Activated B cell treated with CpG ODN at 0.5 μM for 24 hours (primary cell): ENCODE measurements at regions of chr12 and their contacts with region 1.

Region 1: GRCh38 chr12:12032851-12033588 is 37.7 kb upstream of the BCL2L14 start:
- DNase-seq: peak; percentile 34
- ATAC-seq: peak; percentile 72
- H3K4me3 Mint-ChIP-seq: peak overlapping the region; percentile 78
- H3K27ac Mint-ChIP-seq: peak overlapping the region; percentile 41
- H3K4me1 Mint-ChIP-seq: peaks cover 16% of the 10 kb centered on the region
- H3K27me3 Mint-ChIP-seq: peaks cover 5% of the 10 kb centered on the region
- CTCF ChIP-seq: peak; percentile 70

Region 2: DNA sequence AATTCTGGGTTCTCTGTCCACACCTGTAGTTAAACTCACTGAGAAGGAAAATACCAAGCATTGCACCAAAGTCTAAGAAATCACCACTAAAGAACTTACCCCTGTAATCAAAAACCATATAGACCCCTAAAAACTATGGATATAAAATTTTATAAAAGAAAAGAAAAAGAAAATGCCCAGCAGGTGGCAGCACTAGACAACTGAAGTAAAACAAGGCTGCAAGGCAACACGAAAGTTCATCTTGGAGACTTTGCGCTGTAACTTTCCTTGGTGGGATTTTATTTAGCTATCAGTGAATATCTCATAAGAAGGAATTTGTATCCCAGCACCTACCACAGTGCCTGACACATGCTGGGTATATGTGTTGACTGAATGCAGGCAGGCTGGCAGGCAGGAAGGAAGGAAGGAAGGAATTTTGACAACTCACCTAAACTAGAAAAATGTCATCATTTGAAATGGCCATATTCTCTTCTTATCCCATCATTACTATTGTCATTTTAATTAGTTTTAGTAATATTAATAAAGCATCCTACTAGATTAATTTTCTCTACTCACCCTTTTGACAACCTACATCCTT is 451.8 kb before region 1 on chr12:
- CTCF ChIA-PET with region 1: interaction called, 290 read pairs
- POLR2A ChIA-PET with region 1: interaction called, 8 read pairs
- intact Hi-C with region 1: loop called (anchors 1 kb)
- DNase-seq: no peak
- ATAC-seq: no peak
- H3K4me3 Mint-ChIP-seq: no peak overlapping the region
- H3K27ac Mint-ChIP-seq: no peak overlapping the region
- H3K4me1 Mint-ChIP-seq: peaks cover 11% of the 10 kb centered on the region
- H3K27me3 Mint-ChIP-seq: peaks cover 2% of the 10 kb centered on the region
- CTCF ChIP-seq: peak; percentile 40

Region 3: GRCh38 chr12:11730299-11731041 is 302.6 kb before region 1 on chr12:
- CTCF ChIA-PET with region 1: interaction called, 3 read pairs
- POLR2A ChIA-PET with region 1: interaction called, 10 read pairs
- intact Hi-C with region 1: loop called (anchors 2 kb)
- DNase-seq: peak; percentile 41
- ATAC-seq: peak; percentile 78
- H3K4me3 Mint-ChIP-seq: peak overlapping the region; percentile 74
- H3K27ac Mint-ChIP-seq: peak overlapping the region; percentile 89
- H3K4me1 Mint-ChIP-seq: peaks cover 96% of the 10 kb centered on the region
- H3K27me3 Mint-ChIP-seq: no peaks in the 10 kb centered on the region
- CTCF ChIP-seq: no peak

Region 4: DNA sequence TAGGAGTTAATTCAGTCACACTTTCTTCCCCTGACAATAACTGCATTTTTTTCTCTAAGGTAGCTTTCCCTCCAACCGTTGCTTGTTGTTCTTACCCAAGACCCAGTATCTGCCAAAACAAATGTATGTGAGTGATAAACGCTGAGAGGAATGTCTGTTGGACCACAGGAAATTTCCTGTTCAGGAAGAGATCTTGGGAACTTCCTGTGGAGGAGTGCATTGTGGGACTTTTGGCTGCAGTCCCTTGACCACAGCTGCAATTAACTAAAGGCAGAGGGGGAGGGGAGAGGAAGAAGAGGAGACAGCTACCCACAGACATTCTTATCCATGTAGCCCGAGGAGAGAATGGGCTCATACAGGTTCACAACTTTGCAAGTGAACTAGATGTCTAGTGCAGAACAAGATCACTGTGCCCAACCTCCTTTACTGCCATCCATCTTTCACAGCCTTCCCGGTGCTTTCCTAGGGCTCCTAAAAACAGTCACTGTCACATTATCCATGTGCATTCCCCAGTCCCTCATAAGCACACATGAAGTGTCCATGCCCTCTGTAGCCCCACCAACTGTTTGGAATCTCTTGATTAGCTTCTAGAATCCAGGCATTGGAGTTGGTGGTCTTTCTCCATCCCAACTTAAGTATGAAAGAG is 234.0 kb before region 1 on chr12:
- CTCF ChIA-PET with region 1: no interaction called
- POLR2A ChIA-PET with region 1: interaction called, 14 read pairs
- intact Hi-C with region 1: no loop called
- DNase-seq: no peak
- ATAC-seq: no peak
- H3K4me3 Mint-ChIP-seq: no peak overlapping the region
- H3K27ac Mint-ChIP-seq: peak overlapping the region; percentile 57
- H3K4me1 Mint-ChIP-seq: peaks cover 51% of the 10 kb centered on the region
- H3K27me3 Mint-ChIP-seq: no peaks in the 10 kb centered on the region
- CTCF ChIP-seq: no peak

Region 5: DNA sequence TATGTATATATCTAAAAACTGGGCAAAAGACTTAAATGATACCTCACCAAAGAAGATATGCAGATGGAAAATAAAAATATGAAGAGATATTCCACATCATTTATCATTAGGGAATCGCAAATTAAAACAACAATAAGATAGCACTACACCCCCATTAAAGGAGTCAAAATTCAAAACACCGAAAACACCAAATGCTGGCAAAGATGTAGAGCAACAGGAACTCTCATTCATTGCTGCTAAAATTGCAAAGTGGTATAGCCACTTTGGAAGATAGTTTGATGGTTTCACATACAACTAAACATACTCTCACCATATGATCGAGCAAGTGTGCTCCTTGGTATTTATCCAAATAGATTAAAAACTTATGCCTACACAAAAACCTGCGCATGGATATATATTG is 93.8 kb before region 1 on chr12:
- CTCF ChIA-PET with region 1: no interaction called
- POLR2A ChIA-PET with region 1: no interaction called
- intact Hi-C with region 1: no loop called
- DNase-seq: no peak
- ATAC-seq: no peak
- H3K4me3 Mint-ChIP-seq: no peak overlapping the region
- H3K27ac Mint-ChIP-seq: no peak overlapping the region
- H3K4me1 Mint-ChIP-seq: no peaks in the 10 kb centered on the region
- H3K27me3 Mint-ChIP-seq: peaks cover 2% of the 10 kb centered on the region
- CTCF ChIP-seq: no peak

Region 6: GRCh38 chr12:11991604-11992003 is 41.4 kb before region 1 on chr12:
- CTCF ChIA-PET with region 1: no interaction called
- POLR2A ChIA-PET with region 1: no interaction called
- intact Hi-C with region 1: no loop called
- DNase-seq: no peak
- ATAC-seq: no peak
- H3K4me3 Mint-ChIP-seq: no peak overlapping the region
- H3K27ac Mint-ChIP-seq: no peak overlapping the region
- H3K4me1 Mint-ChIP-seq: no peaks in the 10 kb centered on the region
- H3K27me3 Mint-ChIP-seq: no peaks in the 10 kb centered on the region
- CTCF ChIP-seq: no peak

Region 7: GRCh38 chr12:12008931-12009611 is 23.9 kb before region 1 on chr12:
- CTCF ChIA-PET with region 1: interaction called, 26 read pairs
- POLR2A ChIA-PET with region 1: interaction called, 8 read pairs
- intact Hi-C with region 1: loop called (anchors 1 kb)
- DNase-seq: no peak
- ATAC-seq: peak; percentile 60
- H3K4me3 Mint-ChIP-seq: peak overlapping the region; percentile 78
- H3K27ac Mint-ChIP-seq: peak overlapping the region; percentile 81
- H3K4me1 Mint-ChIP-seq: peaks cover 60% of the 10 kb centered on the region
- H3K27me3 Mint-ChIP-seq: no peaks in the 10 kb centered on the region
- CTCF ChIP-seq: no peak

Region 8: GRCh38 chr12:12736759-12737676 is 704.0 kb after region 1 on chr12:
- CTCF ChIA-PET with region 1: interaction called, 5 read pairs
- POLR2A ChIA-PET with region 1: no interaction called
- intact Hi-C with region 1: loop called (anchors 10 kb)
- DNase-seq: peak; percentile 19
- ATAC-seq: peak; percentile 91
- H3K4me3 Mint-ChIP-seq: peak overlapping the region; percentile 30
- H3K27ac Mint-ChIP-seq: peak overlapping the region; percentile 72
- H3K4me1 Mint-ChIP-seq: peaks cover 13% of the 10 kb centered on the region
- H3K27me3 Mint-ChIP-seq: no peaks in the 10 kb centered on the region
- CTCF ChIP-seq: peak; percentile 19